ENCODE measurements at regions of chr2 and their contacts with region 1.

Region 1: DNA sequence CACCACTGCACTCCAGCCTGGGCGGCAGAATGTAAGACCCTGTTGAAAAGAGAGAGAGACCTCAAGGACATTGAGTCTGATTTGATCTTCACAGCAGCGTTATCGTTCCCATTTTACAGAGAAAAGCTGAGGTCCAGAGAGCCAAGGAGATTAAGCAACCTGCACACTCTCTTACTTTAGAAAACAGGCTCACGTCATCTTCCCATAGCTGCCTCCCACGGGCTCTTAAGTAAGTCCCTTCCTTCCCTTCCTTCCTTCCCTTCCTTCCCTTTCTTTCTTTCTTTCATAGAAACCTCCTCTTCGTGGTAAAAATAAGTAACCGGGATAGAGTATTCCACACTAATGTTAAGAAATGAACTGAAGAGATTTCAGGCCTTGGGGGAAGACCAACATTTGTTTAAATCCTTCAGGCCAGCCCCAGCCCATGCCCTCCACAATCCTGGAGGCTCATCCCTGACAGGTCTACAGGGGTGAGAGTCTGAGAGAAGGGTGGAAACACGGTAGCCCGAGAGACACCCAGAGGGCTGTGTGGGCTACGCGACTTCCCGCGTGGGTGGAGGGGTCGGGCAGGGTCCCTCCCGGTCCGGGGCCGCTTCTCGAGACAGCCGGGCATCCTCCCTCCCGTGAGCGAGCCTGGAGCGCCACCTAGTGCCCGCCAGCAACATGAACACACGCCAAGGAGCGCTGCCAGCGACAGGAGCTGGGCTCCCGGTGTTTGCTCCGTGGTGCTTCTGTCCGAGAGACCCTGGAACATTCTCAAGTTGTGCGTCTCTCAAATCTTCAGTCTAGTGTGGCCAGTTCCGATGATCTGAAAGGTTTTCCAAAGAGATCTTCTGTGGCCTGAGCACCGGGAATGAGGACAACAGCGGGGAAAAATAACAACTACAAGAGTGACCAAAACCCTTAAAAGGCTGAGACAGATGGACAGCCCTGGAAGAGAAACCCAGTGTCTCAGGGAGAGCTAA is 160.3 kb downstream of the INO80D start:
- DNase-seq: peak; percentile 49
- ATAC-seq: peak; percentile 57
- H3K4me3 Mint-ChIP-seq: no peak overlapping the region
- H3K27ac Mint-ChIP-seq: no peak overlapping the region
- H3K4me1 Mint-ChIP-seq: peaks cover 7% of the 10 kb centered on the region
- H3K27me3 Mint-ChIP-seq: peaks cover 38% of the 10 kb centered on the region
- CTCF ChIP-seq: no peak

Region 2: DNA sequence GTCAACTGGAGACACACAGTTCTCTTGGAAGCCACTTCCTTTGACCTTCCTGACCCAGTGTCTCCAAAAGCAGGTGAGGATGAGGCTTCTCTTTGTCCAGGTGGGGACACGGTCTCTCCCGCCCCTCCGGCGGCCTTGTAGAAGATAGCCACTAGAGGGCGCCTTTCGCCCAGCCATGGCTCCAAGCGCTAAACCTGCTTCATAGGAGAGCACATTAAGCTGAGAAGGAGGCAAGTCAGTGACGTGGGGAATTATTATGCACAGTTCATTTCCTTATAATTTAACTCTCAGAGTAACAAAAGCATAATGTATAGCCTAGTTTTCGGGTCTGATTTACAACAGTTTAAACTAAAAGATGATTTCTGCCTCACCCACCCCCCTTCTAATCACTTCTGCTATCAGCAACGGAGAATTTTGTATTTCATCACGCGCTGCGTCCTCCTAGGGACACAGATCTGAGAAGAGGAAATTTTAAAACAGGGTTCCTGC is 1780.3 kb before region 1 on chr2:
- CTCF ChIA-PET with region 1: interaction called, 4 read pairs
- POLR2A ChIA-PET with region 1: no interaction called
- intact Hi-C with region 1: loop called (anchors 1 kb)
- DNase-seq: peak; percentile 42
- ATAC-seq: peak; percentile 71
- H3K4me3 Mint-ChIP-seq: peak overlapping the region; percentile 66
- H3K27ac Mint-ChIP-seq: no peak overlapping the region
- H3K4me1 Mint-ChIP-seq: peaks cover 9% of the 10 kb centered on the region
- H3K27me3 Mint-ChIP-seq: peaks cover 14% of the 10 kb centered on the region
- CTCF ChIP-seq: peak; percentile 90

Region 3: GRCh38 chr2:204260162-204260877 is 1665.3 kb before region 1 on chr2:
- CTCF ChIA-PET with region 1: interaction called, 10 read pairs
- POLR2A ChIA-PET with region 1: no interaction called
- intact Hi-C with region 1: loop called (anchors 1 kb)
- DNase-seq: no peak
- ATAC-seq: no peak
- H3K4me3 Mint-ChIP-seq: no peak overlapping the region
- H3K27ac Mint-ChIP-seq: no peak overlapping the region
- H3K4me1 Mint-ChIP-seq: no peaks in the 10 kb centered on the region
- H3K27me3 Mint-ChIP-seq: peaks cover 18% of the 10 kb centered on the region
- CTCF ChIP-seq: no peak

Region 4: DNA sequence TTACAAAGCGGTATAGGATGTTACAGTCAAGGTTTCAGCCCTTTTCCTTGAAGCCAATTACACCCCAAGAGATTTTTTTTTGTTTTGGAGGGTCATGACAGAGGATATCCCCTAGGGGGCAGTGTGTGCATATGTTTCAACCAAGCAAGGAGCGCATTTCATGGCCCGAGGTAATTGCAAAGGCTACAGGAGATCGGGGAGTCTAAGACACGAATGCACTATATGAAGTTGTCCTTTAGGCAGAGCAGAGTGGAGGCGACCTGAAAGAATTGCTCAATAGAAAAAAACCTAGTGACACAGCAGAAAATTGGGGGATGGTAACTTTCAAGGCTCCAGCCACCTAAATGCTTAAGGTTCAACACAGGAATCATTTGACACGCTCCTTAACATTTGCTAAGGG is 1600.2 kb before region 1 on chr2:
- CTCF ChIA-PET with region 1: interaction called, 4 read pairs
- POLR2A ChIA-PET with region 1: no interaction called
- intact Hi-C with region 1: loop called (anchors 1 kb)
- DNase-seq: no peak
- ATAC-seq: peak; percentile 45
- H3K4me3 Mint-ChIP-seq: no peak overlapping the region
- H3K27ac Mint-ChIP-seq: no peak overlapping the region
- H3K4me1 Mint-ChIP-seq: peaks cover 2% of the 10 kb centered on the region
- H3K27me3 Mint-ChIP-seq: peaks cover 2% of the 10 kb centered on the region
- CTCF ChIP-seq: no peak

Region 5: GRCh38 chr2:205323929-205324328 is 601.7 kb before region 1 on chr2:
- CTCF ChIA-PET with region 1: no interaction called
- POLR2A ChIA-PET with region 1: no interaction called
- intact Hi-C with region 1: loop called (anchors 10 kb)
- DNase-seq: no peak
- ATAC-seq: no peak
- H3K4me3 Mint-ChIP-seq: no peak overlapping the region
- H3K27ac Mint-ChIP-seq: no peak overlapping the region
- H3K4me1 Mint-ChIP-seq: peaks cover 10% of the 10 kb centered on the region
- H3K27me3 Mint-ChIP-seq: peaks cover 9% of the 10 kb centered on the region
- CTCF ChIP-seq: no peak

Region 6: GRCh38 chr2:206004004-206004693 is 78.5 kb after region 1 on chr2:
- CTCF ChIA-PET with region 1: no interaction called
- POLR2A ChIA-PET with region 1: no interaction called
- intact Hi-C with region 1: no loop called
- DNase-seq: no peak
- ATAC-seq: no peak
- H3K4me3 Mint-ChIP-seq: no peak overlapping the region
- H3K27ac Mint-ChIP-seq: no peak overlapping the region
- H3K4me1 Mint-ChIP-seq: no peaks in the 10 kb centered on the region
- H3K27me3 Mint-ChIP-seq: no peaks in the 10 kb centered on the region
- CTCF ChIP-seq: no peak